ENCODE measurements at regions of chr11 and their contacts with region 1.

Region 1: GRCh38 chr11:70483077-70483861 is 84.9 kb downstream of the CTTN start:
- DNase-seq: no peak
- H3K4me3 ChIP-seq: no peak overlapping the region
- H3K27ac ChIP-seq: no peak overlapping the region
- H3K4me1 ChIP-seq: no peaks in the 10 kb centered on the region
- H3K27me3 ChIP-seq: no peaks in the 10 kb centered on the region
- CTCF ChIP-seq: no peak
- POLR2A ChIP-seq: no peak

Region 2: GRCh38 chr11:69925366-69926196 is 557.7 kb before region 1 on chr11:
- intact Hi-C with region 1: no loop called
- DNase-seq: no peak
- H3K4me3 ChIP-seq: no peak overlapping the region
- H3K27ac ChIP-seq: peak overlapping the region in 1 of 2 donors; percentile 25
- H3K4me1 ChIP-seq: no peaks in the 10 kb centered on the region
- H3K27me3 ChIP-seq: peaks cover 0 to 3% of the 10 kb centered on the region in 2 donors
- CTCF ChIP-seq: no peak
- POLR2A ChIP-seq: no peak

Region 3: GRCh38 chr11:70739811-70740490 is 256.7 kb after region 1 on chr11:
- intact Hi-C with region 1: loop called (anchors 10 kb)
- DNase-seq: no peak
- H3K4me3 ChIP-seq: no peak overlapping the region
- H3K27ac ChIP-seq: no peak overlapping the region
- H3K4me1 ChIP-seq: no peaks in the 10 kb centered on the region
- H3K27me3 ChIP-seq: no peaks in the 10 kb centered on the region
- CTCF ChIP-seq: no peak
- POLR2A ChIP-seq: no peak

Measured in breast epithelium (tissue), 4 donors.